Heart left ventricle (tissue), 16 donors: ENCODE measurements at regions of chr11 and their contacts with region 1.

Region 1: GRCh38 chr11:113730887-113731726 is 25.0 kb upstream of the TMPRSS5 start:
- DNase-seq: peak in 2 of 5 donors; percentile 20 to 28
- ATAC-seq: peak in 3 of 4 donors; percentile 66 to 71 (median 69)
- H3K4me3 ChIP-seq: no peak overlapping the region
- H3K27ac ChIP-seq: no peak overlapping the region
- H3K4me1 ChIP-seq: no peaks in the 10 kb centered on the region
- H3K27me3 ChIP-seq: no peaks in the 10 kb centered on the region
- CTCF ChIP-seq: peak; percentile 28 to 72 (median 61)
- POLR2A ChIP-seq: no peak

Region 2: DNA sequence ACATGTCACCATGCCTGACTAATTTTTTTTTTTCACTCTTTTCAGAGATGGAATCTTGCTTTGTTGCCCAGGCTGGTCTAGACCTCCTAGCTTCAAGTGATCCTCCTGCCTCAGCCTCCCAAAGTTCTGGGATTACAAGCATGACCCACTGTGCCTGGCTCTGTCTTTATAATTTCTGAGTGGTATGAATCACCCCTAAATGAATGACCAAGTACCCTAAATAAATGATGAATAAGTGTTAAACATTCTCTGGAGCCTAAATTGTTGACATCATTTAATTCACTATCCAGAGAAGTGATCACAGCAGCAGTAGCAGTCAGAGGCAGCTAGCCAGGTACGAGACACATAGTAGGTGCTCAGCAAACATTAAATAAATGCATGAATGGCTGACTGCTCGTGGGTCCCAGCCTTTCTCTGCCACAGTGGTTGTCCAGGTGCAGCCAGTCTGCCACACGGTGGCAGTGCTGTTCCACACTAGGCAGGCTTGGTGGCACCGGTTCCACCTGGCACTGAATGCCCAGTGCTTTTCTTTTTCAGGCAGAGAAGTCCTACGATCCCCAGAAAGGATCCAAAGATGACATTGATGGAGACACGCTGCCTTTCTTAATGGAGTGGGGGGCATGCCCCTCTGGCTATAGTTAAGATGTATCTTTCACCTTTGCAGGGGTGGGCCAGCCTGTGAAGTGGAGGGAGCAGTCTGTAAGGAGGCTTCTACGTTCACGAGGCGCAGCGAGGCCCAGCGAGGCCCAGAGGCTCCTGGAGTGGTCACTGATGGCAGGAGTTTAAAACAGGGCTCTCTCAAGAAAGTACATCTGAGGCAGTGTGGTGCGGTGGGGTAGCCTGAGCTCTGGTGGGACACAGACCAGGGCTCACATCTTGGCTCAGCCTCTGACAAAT is 425.4 kb before region 1 on chr11:
- intact Hi-C with region 1: loop called (anchors 1 to 5 kb)
- DNase-seq: peak; percentile 58 to 85 (median 74)
- ATAC-seq: peak; percentile 88 to 93 (median 91)
- H3K4me3 ChIP-seq: no peak overlapping the region
- H3K27ac ChIP-seq: no peak overlapping the region
- H3K4me1 ChIP-seq: no peaks in the 10 kb centered on the region
- H3K27me3 ChIP-seq: no peaks in the 10 kb centered on the region
- CTCF ChIP-seq: peak; percentile 76 to 94 (median 89)
- POLR2A ChIP-seq: no peak

Region 3: GRCh38 chr11:113532697-113533424 is 198.2 kb before region 1 on chr11:
- intact Hi-C with region 1: loop called in 5 of 10 experiments (anchors 5 to 10 kb)
- DNase-seq: peak; percentile 53 to 79 (median 75)
- ATAC-seq: peak; percentile 55 to 89 (median 74)
- H3K4me3 ChIP-seq: no peak overlapping the region
- H3K27ac ChIP-seq: no peak overlapping the region
- H3K4me1 ChIP-seq: peaks cover 0 to 8% (median 0%) of the 10 kb centered on the region in 12 donors
- H3K27me3 ChIP-seq: peaks cover 0 to 12% (median 0%) of the 10 kb centered on the region in 9 donors
- CTCF ChIP-seq: peak; percentile 79 to 92 (median 85)
- POLR2A ChIP-seq: no peak

Region 4: GRCh38 chr11:113540416-113541330 is 190.4 kb before region 1 on chr11:
- intact Hi-C with region 1: loop called in 5 of 10 experiments (anchors 5 to 10 kb)
- DNase-seq: no peak
- ATAC-seq: no peak
- H3K4me3 ChIP-seq: no peak overlapping the region
- H3K27ac ChIP-seq: no peak overlapping the region
- H3K4me1 ChIP-seq: no peaks in the 10 kb centered on the region
- H3K27me3 ChIP-seq: peaks cover 0 to 4% (median 0%) of the 10 kb centered on the region in 9 donors
- CTCF ChIP-seq: no peak
- POLR2A ChIP-seq: no peak

Region 5: GRCh38 chr11:113553235-113553634 is 177.9 kb before region 1 on chr11:
- intact Hi-C with region 1: loop called in 1 of 10 experiments (anchors 10 kb)
- DNase-seq: no peak
- ATAC-seq: peak in 2 of 4 donors; percentile 36 to 54
- H3K4me3 ChIP-seq: no peak overlapping the region
- H3K27ac ChIP-seq: no peak overlapping the region
- H3K4me1 ChIP-seq: peaks cover 0 to 4% (median 0%) of the 10 kb centered on the region in 12 donors
- H3K27me3 ChIP-seq: peaks cover 0 to 14% (median 0%) of the 10 kb centered on the region in 9 donors
- CTCF ChIP-seq: no peak
- POLR2A ChIP-seq: no peak